HCT116 (cell line): ENCODE measurements at regions of chr20 and their contacts with region 1.

Region 1: GRCh38 chr20:51385646-51386530 is 156.6 kb downstream of the NFATC2 start:
- DNase-seq: peak; percentile 24
- ATAC-seq: peak; percentile 87
- H3K4me3 ChIP-seq: no peak overlapping the region
- H3K27ac ChIP-seq: no peak overlapping the region
- H3K4me1 ChIP-seq: no peaks in the 10 kb centered on the region; a peak in 1 of 4 replicates
- H3K27me3 ChIP-seq: no peaks in the 10 kb centered on the region
- CTCF ChIP-seq: peak; percentile 72 to 76 (median 72); a peak in 5 of 6 replicates
- POLR2A ChIP-seq: no peak
- RAD21 ChIP-seq: peak; percentile 81

Region 2: DNA sequence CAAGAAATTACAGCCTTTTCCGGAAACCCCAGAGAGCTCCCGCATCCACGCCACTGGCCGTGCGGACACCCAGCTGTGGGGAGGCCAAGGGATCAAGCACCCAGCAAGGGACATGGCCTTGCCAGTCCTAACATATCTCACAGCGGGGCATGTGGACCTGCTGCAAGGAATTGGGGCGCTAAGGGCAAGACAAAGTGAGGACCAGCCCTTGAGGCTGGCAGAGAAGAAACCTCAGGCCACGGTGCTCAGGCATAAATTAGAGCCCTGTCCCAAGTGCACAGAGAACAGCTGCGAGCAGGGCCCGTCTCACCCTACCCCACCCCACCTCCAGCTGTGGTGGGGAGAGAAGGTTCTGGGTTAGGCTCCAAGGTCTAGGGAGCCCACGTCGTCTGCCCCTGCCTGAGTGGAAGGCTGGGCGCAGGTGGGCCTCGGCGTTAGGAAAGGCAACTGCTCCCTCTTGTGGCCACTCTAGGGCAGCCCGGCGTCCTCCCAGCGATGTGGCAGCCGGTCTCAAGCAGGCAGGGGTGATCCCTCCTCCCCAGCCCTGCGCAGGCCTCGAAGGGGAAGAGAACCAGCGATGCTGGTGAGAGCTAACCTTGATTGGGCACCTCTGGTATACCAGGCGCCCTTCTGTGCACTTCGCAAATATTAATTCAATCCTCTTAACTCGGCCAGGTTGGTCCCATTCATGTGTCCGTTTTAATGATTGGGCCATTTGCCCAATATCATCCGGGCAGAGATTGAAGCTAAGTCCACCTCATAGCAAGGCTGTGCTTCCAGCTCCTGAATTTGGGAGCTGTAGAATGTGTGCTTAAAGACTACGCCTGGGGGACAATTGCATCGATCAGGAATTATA is 79.2 kb before region 1 on chr20:
- CTCF ChIA-PET with region 1: no interaction called
- POLR2A ChIA-PET with region 1: no interaction called
- RAD21 ChIA-PET with region 1: no interaction called
- intact Hi-C with region 1: no loop called
- DNase-seq: peak; percentile 62
- ATAC-seq: peak; percentile 100
- H3K4me3 ChIP-seq: no peak overlapping the region
- H3K27ac ChIP-seq: no peak overlapping the region; the same call in 1 of the 2 replicates
- H3K4me1 ChIP-seq: peaks cover 0 to 7% of the 10 kb centered on the region in 2 experiments; a peak in 1 of 4 replicates
- H3K27me3 ChIP-seq: no peaks in the 10 kb centered on the region
- CTCF ChIP-seq: peak; percentile 85 to 95 (median 88)
- POLR2A ChIP-seq: no peak
- RAD21 ChIP-seq: peak; percentile 99

Region 3: GRCh38 chr20:51354769-51355319 is 31.0 kb before region 1 on chr20:
- CTCF ChIA-PET with region 1: no interaction called
- POLR2A ChIA-PET with region 1: no interaction called
- RAD21 ChIA-PET with region 1: no interaction called
- intact Hi-C with region 1: no loop called
- DNase-seq: no peak
- ATAC-seq: peak; percentile 30; the same call in 1 of the 2 replicates
- H3K4me3 ChIP-seq: no peak overlapping the region
- H3K27ac ChIP-seq: no peak overlapping the region
- H3K4me1 ChIP-seq: peaks cover 0 to 7% of the 10 kb centered on the region in 2 experiments; a peak in 3 of 4 replicates
- H3K27me3 ChIP-seq: no peaks in the 10 kb centered on the region
- CTCF ChIP-seq: no peak
- POLR2A ChIP-seq: no peak
- RAD21 ChIP-seq: no peak

Region 4: DNA sequence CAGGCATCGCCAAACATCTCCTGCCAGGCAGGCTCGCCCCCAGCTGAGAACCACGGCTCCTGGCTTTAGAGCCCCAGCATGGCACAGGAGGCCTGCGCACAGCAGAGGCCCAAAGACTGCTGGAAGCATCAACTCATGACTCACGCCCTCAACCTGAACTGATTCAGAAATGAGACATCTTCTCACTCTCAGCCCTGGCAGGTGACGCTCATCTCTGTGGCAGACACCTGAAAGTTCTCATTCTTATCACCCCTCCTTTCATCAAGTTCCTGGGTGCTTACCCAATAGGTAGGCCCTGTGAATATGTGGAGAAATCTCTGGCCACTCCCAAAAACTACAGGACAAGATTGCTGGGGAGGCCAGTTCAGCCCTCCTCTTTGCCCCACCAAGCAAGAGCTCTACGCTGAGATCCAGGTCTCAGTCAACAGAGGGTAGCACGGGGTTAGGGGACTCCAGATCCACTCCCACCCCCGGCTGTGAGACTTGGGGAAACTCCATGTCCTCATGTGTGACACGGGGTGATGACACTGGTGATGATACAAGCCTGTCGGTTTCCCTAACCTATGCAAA is 145.3 kb after region 1 on chr20:
- CTCF ChIA-PET with region 1: no interaction called
- POLR2A ChIA-PET with region 1: no interaction called
- RAD21 ChIA-PET with region 1: no interaction called
- intact Hi-C with region 1: loop called (anchors 5 kb)
- DNase-seq: peak; percentile 76
- ATAC-seq: peak; percentile 72
- H3K4me3 ChIP-seq: no peak overlapping the region
- H3K27ac ChIP-seq: peak overlapping the region; percentile 57
- H3K4me1 ChIP-seq: peaks cover 38 to 53% of the 10 kb centered on the region in 2 experiments
- H3K27me3 ChIP-seq: no peaks in the 10 kb centered on the region
- CTCF ChIP-seq: no peak
- POLR2A ChIP-seq: no peak
- RAD21 ChIP-seq: no peak

Region 5: DNA sequence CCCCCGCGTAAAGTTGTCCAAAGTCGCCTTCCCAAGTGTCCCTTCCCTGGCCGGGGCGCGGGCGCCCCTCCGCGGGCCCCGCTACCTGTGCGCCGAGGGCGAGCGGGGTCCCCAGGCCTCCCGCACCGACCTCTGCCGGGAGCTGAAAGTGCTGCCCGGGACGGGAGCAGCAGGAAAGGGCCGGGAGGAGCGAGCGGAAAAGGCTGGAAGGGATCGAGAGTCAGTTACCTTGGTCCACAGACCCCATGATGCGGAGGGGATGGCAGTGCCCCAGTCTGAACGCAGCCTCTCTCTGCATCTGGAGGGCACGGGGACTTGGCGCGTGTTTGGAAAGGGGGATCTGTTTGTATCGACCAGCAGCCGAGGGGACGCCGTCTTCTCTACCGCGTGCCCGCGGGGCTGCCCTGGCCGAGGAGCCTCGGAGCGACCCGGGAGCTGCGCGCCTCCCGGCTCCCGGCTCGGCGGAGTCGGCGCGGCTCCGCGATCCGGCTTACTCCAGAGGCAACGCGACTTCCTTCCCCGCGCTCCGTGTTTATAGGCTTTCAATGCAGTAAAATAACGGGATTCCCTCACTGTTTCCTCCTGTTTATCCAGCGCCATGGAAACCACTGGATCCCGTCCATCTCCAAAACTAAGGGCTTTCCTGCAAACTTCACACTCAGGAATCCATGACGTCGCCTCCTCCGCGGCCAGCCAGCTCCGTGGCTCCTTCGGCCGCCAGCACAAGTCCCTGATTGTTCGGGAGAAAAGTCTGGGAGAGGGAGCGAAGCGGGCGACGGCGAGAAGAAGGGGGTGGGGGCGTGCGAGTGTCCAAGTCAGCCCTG is 176.7 kb after region 1 on chr20:
- CTCF ChIA-PET with region 1: interaction called, 10 read pairs
- POLR2A ChIA-PET with region 1: no interaction called
- RAD21 ChIA-PET with region 1: no interaction called
- intact Hi-C with region 1: no loop called
- DNase-seq: peak; percentile 26
- ATAC-seq: peak; percentile 63
- H3K4me3 ChIP-seq: peak overlapping the region; percentile 48 to 60
- H3K27ac ChIP-seq: no peak overlapping the region
- H3K4me1 ChIP-seq: peaks cover 17 to 36% of the 10 kb centered on the region in 2 experiments
- H3K27me3 ChIP-seq: peaks cover 30% of the 10 kb centered on the region; the same call in 1 of the 2 replicates
- CTCF ChIP-seq: peak in 2 of 3 experiments; percentile 18 to 37; a peak in 3 of 6 replicates
- POLR2A ChIP-seq: no peak
- RAD21 ChIP-seq: peak; percentile 50